OCI-LY7 (cell line): ENCODE measurements at regions of chr3 and their contacts with region 1.

Region 1: DNA sequence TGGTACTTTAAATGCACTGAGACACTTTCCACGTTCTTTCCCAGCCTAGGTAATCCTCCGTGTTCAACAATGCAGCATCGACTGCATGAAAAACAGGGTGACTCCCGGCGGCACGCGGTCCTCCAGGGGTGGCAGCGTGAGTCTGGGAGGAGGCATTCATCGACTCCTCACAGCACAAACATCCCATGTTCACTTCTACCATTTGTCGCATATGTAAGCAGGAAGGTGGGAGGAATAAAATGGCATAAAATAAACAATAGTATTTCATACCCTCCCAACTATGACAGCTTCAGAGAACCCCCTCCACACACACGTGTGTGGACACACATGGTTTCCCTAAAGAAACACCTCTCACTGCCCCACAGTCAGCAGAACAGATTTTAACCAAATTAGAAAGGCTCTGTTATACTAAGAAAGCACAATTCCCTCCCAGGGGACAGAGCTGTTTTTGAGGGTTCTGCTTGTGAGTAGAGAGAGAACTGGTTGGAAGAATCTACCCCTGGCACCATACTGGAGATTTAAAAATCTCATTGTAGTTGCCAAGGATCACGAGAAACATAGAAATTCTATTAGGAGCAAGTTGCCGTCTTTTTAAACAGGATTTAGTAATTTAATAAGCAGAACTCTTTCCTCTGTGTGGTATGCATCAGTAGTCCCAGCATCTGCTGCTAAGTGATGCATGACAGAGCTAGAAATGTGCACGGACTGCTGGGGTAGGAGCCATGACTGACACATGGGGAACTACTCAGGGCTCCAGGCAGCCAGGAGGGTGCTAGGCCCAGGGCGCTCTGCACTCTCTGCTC is 6.0 kb downstream of the FAM43A start:
- DNase-seq: peak; percentile 97
- H3K4me3 ChIP-seq: peak overlapping the region; percentile 47
- H3K27ac ChIP-seq: peak overlapping the region; percentile 94
- H3K4me1 ChIP-seq: peaks cover 81% of the 10 kb centered on the region
- CTCF ChIP-seq: no peak

Region 2: GRCh38 chr3:193869221-193870201 is 822.2 kb before region 1 on chr3:
- CTCF ChIA-PET with region 1: no interaction called
- POLR2A ChIA-PET with region 1: no interaction called
- intact Hi-C with region 1: no loop called
- DNase-seq: no peak
- H3K4me3 ChIP-seq: peak overlapping the region; percentile 59
- H3K27ac ChIP-seq: peak overlapping the region; percentile 89
- H3K4me1 ChIP-seq: peaks cover 73% of the 10 kb centered on the region
- CTCF ChIP-seq: no peak

Region 3: DNA sequence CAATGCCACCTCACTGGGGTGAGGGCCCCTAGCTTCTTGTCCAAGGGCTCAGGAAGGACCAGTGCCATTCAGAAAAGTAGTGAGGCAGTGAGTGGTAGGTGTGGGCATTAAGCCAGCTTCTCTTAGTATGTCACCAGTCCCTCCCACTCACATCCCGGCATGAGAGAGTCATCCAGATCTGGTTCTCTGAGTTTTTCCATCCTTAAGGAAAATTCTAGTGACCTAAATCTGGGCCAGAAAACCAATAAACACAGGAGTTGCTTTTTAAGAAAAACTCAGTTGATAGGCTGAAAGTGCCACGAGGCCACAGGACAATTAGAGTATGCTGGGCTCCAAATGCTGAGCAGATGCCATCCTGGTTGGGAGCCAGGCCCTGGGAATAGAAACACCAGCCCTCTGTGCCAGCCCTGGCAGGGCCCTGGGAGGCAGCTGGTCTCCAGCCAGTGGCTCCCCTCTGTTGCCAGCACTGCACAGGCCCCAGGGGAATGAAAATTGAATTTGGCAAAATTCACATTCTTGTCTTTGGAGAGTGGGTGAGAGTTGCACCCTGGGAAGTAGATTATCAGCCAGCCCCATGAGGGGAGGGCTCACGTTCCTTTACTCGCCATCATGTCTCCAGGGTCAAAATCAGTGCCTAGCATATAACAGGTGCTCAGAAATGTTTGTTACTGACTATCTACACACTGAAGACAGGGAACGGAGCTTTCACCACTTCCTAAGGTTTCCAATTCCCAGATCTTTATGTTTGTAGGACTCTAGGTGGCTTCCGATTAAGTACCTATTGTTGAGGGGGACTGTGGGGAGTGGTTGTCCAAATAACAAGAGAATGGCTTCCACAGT is 46.8 kb after region 1 on chr3:
- CTCF ChIA-PET with region 1: no interaction called
- POLR2A ChIA-PET with region 1: interaction called, 13 read pairs
- intact Hi-C with region 1: loop called (anchors 1 kb)
- DNase-seq: no peak
- H3K4me3 ChIP-seq: no peak overlapping the region
- H3K27ac ChIP-seq: no peak overlapping the region
- H3K4me1 ChIP-seq: peaks cover 30% of the 10 kb centered on the region
- CTCF ChIP-seq: no peak

Region 4: DNA sequence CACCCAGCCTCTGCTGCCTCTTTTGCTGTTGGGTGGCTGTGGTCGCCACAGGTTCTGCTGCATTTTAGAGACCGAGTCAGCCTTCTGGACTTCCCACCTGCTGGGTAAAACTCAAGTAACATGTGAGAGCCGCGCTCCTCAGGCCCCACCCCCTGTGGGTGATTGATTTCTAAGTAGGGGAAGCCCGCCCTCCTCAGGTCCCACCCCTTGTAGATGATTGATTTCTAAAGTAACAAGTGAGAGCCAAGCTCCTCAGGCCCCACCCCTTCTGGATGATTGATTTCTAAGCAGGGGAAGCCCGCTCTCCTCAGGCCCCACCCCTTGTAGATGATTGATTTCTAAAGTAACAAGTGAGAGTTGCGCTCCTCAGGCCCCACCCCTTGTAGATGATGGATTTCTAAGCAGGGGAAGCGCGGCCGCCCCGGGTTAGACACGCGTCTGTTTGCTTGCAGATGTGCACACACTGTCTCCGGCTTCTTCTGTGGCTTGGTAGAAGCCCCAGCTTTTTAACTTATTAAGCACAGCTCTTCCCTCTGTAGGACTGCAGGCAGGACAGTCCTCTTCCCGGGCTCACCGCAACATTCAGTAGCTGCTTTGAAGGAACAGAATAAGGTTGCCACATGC is 77.5 kb after region 1 on chr3:
- CTCF ChIA-PET with region 1: no interaction called
- POLR2A ChIA-PET with region 1: interaction called, 7 read pairs
- intact Hi-C with region 1: loop called (anchors 1 kb)
- DNase-seq: peak; percentile 98
- H3K4me3 ChIP-seq: peak overlapping the region; percentile 58
- H3K27ac ChIP-seq: peak overlapping the region; percentile 27
- H3K4me1 ChIP-seq: peaks cover 15% of the 10 kb centered on the region
- CTCF ChIP-seq: no peak